Caco-2 (cell line): ENCODE measurements at regions of chr1 and their contacts with region 1.

Region 1: DNA sequence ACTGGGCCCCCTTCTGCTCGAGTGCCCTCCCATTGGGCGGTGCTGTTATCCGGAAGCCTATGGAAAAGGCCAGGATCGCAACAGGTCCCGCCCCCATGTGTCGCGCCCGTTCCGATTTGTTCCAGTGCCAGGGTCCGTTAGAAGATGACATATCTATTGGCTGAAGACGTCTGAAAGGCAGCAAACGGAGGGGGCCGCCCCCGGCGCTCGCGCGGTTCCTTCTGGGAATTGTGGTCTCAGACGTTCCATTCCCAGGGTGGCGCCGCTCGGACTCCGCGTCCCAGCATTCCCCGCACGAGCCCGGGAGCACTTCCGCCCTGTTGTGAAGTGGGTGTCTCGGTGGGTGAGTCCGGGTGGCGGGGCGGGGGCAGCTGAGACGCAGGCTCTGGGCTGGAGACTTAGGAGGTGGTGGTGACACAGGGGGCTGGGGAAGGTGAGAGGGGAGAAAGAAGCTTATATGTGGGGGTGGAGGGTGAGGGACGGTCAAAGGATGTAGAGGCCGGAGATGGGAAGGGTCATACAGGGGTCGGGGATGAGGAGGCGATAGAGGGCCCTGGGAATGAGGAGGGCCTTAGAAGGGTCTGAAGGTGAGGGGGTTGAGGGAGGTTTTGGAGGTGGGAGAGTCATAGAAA is at the start of gene ZSCAN20:
- DNase-seq: peak; percentile 93 to 95
- H3K4me3 ChIP-seq: peak within 1 kb of the TSS; percentile 48
- H3K4me3 Mint-ChIP-seq: peak within 1 kb of the TSS; percentile 81
- H3K27ac Mint-ChIP-seq: peak within 1 kb of the TSS; percentile 67
- H3K4me1 ChIP-seq: 0 out of 2 replicates have a peak, but pooled peaks cover 4% of the 10 kb centered on the region
- H3K4me1 Mint-ChIP-seq: peaks cover 13% of the 10 kb centered on the region
- H3K27me3 ChIP-seq: no peaks in the 10 kb centered on the region
- H3K27me3 Mint-ChIP-seq: no peaks in the 10 kb centered on the region
- CTCF ChIP-seq: no peak
- total RNA-seq, gene ZSCAN20: 2.7 and 3.0 TPM in 2 replicates

Region 2: DNA sequence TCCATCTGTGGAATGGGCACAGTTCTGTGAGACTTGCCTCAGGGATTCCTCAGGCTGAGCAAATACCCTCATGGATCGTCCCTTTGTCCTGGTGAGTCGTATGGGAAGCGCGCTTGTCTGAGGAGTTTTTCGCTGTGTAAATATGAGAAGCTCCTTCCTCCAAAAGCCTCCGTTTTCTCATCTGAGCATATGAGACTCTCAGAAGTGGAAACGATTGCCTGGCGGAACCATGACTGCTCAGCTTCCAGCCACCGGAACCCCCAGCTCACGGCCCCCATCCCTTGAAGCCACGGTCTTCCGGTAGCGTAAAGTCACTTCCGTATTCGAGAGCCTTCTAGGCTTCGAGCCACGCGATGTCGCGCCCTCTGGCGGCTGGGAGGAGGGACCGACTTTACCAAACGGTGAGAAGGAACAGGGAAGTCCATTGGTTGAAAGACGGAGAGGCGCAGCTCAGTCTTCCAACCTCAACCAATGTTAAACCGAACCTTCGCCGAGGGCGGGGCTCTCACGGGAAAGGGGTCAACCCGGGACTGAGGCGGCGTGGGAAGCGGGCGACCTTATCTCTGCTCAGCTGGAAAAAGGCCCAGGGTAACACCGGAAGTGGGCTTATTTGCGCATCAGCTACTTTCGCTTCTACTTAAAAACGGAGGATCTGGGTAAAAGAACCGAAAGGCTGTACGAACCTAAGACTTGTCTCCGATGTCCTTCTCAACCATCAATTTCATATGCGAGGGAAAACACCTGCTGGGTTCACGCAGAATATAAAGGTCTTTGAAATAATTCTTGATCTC is 345.3 kb before region 1 on chr1:
- CTCF ChIA-PET with region 1: interaction called, 3 read pairs
- POLR2A ChIA-PET with region 1: no interaction called
- intact Hi-C with region 1: loop called (anchors 2 kb)
- DNase-seq: peak; percentile 94 to 97
- H3K4me3 ChIP-seq: peak overlapping the region; percentile 77
- H3K4me3 Mint-ChIP-seq: peak overlapping the region; percentile 80
- H3K27ac Mint-ChIP-seq: peak overlapping the region; percentile 90
- H3K4me1 ChIP-seq: no peaks in the 10 kb centered on the region
- H3K4me1 Mint-ChIP-seq: peaks cover 6% of the 10 kb centered on the region
- H3K27me3 ChIP-seq: no peaks in the 10 kb centered on the region
- H3K27me3 Mint-ChIP-seq: no peaks in the 10 kb centered on the region
- CTCF ChIP-seq: peak; percentile 56 to 80

Region 3: GRCh38 chr1:33349081-33349759 is 123.2 kb before region 1 on chr1:
- CTCF ChIA-PET with region 1: no interaction called
- POLR2A ChIA-PET with region 1: no interaction called
- intact Hi-C with region 1: no loop called
- DNase-seq: peak in 1 of 2 experiments; percentile 30
- H3K4me3 ChIP-seq: peak overlapping the region; percentile 73
- H3K4me3 Mint-ChIP-seq: peak overlapping the region; percentile 88
- H3K27ac Mint-ChIP-seq: peak overlapping the region; percentile 55
- H3K4me1 ChIP-seq: peaks cover 22% of the 10 kb centered on the region
- H3K4me1 Mint-ChIP-seq: peaks cover 33% of the 10 kb centered on the region
- H3K27me3 ChIP-seq: no peaks in the 10 kb centered on the region
- H3K27me3 Mint-ChIP-seq: no peaks in the 10 kb centered on the region
- CTCF ChIP-seq: no peak

Region 4: DNA sequence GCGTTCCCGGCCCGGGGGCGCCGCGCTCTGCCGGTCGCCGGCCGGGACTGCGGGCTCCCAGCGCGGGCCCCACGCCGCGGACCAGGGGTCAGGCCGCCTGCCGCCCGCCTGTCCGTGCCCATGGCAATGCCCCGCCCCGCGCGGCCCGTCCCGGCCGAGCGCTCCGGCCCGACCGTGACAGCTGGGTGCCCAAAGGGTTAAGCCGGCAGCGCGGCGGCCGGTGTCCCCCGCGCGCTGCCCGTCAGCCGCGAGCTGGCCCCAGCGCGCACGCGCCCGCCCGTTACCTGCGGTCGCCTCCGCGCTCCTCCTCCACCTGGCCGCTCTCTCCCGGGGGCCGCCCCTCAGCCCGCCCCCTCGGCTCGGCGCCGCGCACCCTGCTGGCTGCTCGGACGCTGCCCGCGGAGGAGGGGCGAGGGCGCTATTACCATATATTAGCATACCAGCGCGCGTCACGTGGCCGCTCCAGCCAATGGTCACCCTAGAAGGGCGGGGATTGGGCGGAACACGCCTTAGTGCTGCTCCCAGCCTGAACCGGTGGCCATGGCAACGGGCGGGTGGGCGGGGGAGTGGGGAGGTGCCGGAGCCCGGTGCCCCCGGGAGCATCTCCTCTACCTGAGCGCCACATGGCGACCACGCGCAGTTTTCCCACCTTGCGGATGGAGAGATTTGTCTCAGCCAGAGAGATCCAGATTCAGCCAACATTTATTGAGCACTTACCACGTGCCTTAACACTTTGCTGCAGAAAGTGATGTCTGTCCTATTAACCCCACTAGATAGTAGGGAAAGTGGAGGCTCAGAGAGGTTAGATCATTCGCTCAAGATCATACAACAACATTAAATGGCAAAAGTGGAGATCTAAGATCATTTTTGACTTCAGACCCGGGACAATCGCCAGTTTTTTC is 41.5 kb before region 1 on chr1 and contains the start of gene PHC2:
- CTCF ChIA-PET with region 1: no interaction called
- POLR2A ChIA-PET with region 1: no interaction called
- intact Hi-C with region 1: loop called (anchors 1 kb)
- DNase-seq: peak; percentile 95 to 97
- H3K4me3 ChIP-seq: peak within 1 kb of the TSS; percentile 61
- H3K4me3 Mint-ChIP-seq: peak within 1 kb of the TSS; percentile 46
- H3K27ac Mint-ChIP-seq: no peak within 1 kb of the TSS
- H3K4me1 ChIP-seq: peaks cover 6% of the 10 kb centered on the region; the same call in 1 of the 2 replicates
- H3K4me1 Mint-ChIP-seq: no peaks in the 10 kb centered on the region
- H3K27me3 ChIP-seq: no peaks in the 10 kb centered on the region
- H3K27me3 Mint-ChIP-seq: no peaks in the 10 kb centered on the region
- CTCF ChIP-seq: no peak
- total RNA-seq, gene PHC2: 31.8 and 35.2 TPM in 2 replicates

Region 5: GRCh38 chr1:33610864-33611455 is 138.5 kb after region 1 on chr1:
- CTCF ChIA-PET with region 1: no interaction called
- POLR2A ChIA-PET with region 1: no interaction called
- intact Hi-C with region 1: loop called (anchors 5 kb)
- DNase-seq: no peak
- H3K4me3 ChIP-seq: no peak overlapping the region
- H3K4me3 Mint-ChIP-seq: no peak overlapping the region
- H3K27ac Mint-ChIP-seq: no peak overlapping the region
- H3K4me1 ChIP-seq: no peaks in the 10 kb centered on the region
- H3K4me1 Mint-ChIP-seq: no peaks in the 10 kb centered on the region
- H3K27me3 ChIP-seq: no peaks in the 10 kb centered on the region
- H3K27me3 Mint-ChIP-seq: peaks cover 3% of the 10 kb centered on the region
- CTCF ChIP-seq: no peak